ENCODE measurements at regions of chr1 and their contacts with region 1.

Region 1: DNA sequence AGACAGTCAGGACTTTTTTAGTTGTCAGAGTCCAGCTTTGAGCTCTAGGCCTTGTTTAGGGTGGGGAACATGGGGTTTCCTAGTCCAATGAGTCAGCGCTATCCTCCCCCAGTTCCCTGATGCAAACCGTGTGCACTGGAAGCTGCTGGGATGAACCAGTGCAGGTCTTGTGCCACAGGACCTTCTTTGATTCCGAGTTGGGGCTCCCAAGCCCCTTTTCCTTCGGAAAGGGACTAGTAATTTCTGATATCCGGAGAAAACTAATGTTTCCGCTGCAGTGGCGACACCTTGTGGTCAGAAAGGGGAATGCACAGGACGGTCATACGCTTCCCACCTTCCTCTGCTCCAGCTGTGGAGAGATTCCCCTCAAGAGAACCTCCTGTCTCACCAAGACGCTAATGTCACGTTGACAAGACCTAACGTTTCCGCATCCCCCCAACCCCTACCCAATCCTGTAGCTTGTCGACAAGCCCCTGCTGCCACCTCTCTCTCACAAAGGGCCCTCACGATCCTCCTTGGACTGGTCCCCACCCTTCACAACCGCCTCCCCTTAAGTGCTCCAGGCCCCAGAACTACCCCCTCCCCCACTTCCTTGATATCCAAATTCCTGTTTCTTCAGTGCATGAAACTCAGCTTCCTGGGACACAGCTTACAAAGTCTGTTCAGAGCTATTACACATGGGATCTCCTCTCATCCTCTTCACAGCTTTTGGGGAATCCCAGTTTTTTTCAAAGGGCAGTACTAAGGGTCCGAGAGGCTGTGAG is 30.9 kb downstream of the GPA33 start:
- DNase-seq: peak; percentile 80
- ATAC-seq: peak; percentile 63

Region 2: DNA sequence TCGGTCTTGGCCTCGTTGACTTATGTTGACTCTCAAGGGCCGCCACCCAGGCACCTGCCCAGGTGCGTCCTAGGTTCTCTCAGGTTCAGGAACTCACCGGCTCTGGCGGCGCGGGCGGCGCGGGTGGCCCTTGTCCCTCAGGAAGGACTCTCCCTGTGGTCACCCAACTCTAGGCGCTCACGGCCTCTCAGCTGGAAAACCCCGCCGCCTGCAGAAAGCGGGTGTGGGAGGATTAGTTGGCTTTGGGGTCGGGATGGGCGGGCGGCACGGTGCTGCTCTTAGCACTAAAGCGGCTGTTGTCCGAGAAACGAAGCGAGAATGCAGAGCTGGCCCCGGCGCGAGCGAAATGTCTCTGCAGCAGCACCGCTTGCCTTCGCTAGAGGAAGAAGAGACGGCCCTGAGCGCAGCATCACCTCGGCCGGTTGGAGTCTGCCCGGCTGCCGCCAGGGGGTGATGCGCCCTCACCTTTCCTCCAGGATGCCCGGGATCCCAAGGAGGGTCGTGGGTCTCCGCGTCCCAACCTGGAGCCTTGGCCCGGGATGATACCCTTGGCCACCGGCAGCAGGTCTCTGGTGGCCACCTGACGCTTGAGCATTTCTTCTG is 175.1 kb before region 1 on chr1:
- intact Hi-C with region 1: loop called (anchors 10 kb)
- DNase-seq: peak; percentile 63
- ATAC-seq: peak; percentile 86

Region 3: DNA sequence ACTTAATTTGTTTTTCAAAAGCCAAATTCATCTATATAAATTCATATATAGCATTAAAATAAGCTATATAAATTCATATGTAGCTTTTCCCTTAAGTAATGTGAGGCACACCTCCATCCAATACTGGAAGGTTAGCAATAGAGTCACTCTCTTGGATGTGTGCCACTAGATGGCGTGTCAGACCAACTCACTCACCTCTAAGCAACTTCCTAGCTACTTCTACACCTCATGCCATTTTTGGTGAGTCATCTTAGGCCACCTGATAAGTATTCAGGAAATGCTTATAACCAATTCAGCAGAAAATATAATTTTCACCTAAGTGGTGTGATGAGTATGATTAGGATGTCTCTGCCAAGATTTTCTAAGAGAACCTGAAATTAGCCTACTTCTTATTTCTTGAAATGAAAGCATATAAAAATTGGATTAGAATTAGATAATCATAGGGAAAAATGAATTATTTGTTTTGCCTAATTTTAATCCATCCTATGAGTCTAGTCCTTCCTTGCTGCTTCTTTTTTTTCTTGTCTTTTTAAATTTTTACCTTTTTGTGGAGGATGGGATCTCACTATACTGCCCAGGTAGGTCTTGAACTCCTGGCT is 148.7 kb before region 1 on chr1:
- intact Hi-C with region 1: loop called (anchors 5 kb)
- DNase-seq: peak; percentile 38
- ATAC-seq: peak; percentile 93

Region 4: DNA sequence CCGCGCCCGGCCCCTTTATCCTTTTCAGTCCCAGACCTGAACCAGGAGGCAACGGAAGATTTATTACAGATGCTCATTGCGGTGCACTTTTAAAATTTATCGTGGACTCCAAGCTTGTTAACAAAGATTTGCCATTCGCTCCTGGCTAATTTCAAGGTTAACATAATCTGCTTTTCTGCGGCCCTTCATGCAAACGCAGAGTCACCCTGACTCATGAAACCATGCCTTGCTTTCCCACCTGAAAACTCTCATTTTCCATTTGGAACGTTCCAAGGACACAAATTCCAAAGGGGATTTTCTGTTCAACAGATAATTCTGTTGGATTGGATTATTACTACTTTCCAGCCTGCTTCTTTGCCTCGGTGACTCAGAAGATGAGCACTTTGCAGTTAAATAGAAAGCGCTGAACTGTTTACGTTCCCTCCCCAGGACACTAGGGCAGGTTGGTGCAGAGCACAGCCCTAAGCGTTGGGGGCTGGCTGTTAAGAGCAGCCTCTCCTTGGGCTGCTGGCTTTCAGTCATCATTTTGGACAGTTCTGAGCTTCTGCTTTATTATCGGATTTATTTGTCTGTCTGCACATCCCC is 408.0 kb after region 1 on chr1:
- intact Hi-C with region 1: no loop called
- DNase-seq: no peak
- ATAC-seq: no peak

Measured in left ventricle myocardium superior (tissue), 1 donor.